B cell (primary cell): ENCODE measurements at regions of chr12 and their contacts with region 1.

Region 1: DNA sequence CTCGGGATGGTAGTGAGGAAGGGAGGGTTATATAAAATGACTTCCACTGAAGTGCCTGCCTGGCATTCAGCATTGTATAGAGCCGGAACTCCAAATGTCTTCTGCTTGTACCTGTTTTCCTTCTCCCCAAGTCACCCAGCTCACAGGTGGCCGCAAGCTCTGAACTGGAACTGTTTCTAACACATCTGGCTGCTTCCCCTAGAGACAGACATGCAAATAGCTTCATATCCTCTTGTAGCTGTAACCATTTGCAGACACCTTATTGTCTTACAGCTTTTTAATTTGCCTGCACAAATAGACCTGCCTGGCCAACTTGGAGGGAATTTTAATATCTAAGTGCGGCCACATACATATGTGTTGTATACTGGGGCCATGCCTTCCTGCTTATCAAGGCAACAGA is 126.0 kb downstream of the CHST11 start:
- DNase-seq: peak; percentile 90
- ATAC-seq: peak; percentile 91
- H3K4me3 ChIP-seq: peak overlapping the region in 3 of 5 experiments; percentile 4 to 30 (median 26)
- H3K4me3 Mint-ChIP-seq: peak overlapping the region; percentile 59
- H3K27ac ChIP-seq: peak overlapping the region; percentile 72 to 93
- H3K27ac Mint-ChIP-seq: peak overlapping the region; percentile 69
- H3K4me1 ChIP-seq: peaks cover 75 to 80% of the 10 kb centered on the region in 2 donors
- H3K4me1 Mint-ChIP-seq: peaks cover 88% of the 10 kb centered on the region
- H3K27me3 ChIP-seq: no peaks in the 10 kb centered on the region
- H3K27me3 Mint-ChIP-seq: no peaks in the 10 kb centered on the region
- CTCF ChIP-seq: no peak

Region 2: DNA sequence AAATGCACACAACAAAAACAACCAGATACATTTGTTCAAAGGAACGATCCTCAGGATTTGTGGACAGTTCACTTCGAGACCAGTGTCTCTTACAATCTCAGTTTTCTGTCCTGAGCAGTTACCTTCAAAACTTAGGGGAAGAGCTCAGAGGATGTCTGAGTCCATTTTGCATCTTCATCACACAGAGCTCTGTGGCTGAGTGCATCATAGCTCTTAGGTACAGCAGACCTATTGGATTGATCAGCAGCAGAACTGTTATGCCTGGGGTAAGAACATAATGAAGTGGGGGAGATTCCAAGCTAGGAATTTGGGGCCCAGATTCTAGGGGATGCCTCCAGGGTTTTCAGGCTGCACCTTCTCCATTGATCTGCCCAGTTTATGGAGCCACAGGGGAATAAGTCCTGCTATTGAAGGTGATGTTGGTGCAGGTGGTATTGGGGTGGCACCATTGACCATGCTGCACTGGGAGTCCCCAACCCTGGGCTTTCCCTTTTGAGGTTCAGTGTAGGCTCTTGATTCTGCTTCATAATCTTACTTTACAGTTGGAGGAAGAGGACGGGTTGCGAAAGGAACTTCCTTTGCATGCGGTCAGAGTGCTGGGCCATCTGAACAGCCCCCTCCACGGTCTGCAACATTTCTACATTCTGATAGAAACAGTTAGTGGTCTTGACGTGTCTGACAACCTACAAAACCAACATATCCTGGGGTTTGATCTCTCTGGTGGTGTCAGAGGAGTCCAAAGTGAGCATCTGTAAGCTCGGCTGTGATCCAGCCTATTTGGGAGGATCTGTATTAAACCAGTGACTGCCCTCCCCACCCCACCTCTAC is 13.2 kb before region 1 on chr12:
- CTCF ChIA-PET with region 1: interaction called, 6 read pairs
- POLR2A ChIA-PET with region 1: interaction called, 7 read pairs
- intact Hi-C with region 1: loop called (anchors 1 kb)
- DNase-seq: peak; percentile 90
- ATAC-seq: peak; percentile 75
- H3K4me3 ChIP-seq: peak overlapping the region in 3 of 5 experiments; percentile 18 to 50 (median 21)
- H3K4me3 Mint-ChIP-seq: peak overlapping the region; percentile 79
- H3K27ac ChIP-seq: peak overlapping the region; percentile 70 to 87
- H3K27ac Mint-ChIP-seq: peak overlapping the region; percentile 82
- H3K4me1 ChIP-seq: peaks cover 37 to 55% of the 10 kb centered on the region in 2 donors
- H3K4me1 Mint-ChIP-seq: peaks cover 75% of the 10 kb centered on the region
- H3K27me3 ChIP-seq: no peaks in the 10 kb centered on the region
- H3K27me3 Mint-ChIP-seq: no peaks in the 10 kb centered on the region
- CTCF ChIP-seq: no peak

Region 3: DNA sequence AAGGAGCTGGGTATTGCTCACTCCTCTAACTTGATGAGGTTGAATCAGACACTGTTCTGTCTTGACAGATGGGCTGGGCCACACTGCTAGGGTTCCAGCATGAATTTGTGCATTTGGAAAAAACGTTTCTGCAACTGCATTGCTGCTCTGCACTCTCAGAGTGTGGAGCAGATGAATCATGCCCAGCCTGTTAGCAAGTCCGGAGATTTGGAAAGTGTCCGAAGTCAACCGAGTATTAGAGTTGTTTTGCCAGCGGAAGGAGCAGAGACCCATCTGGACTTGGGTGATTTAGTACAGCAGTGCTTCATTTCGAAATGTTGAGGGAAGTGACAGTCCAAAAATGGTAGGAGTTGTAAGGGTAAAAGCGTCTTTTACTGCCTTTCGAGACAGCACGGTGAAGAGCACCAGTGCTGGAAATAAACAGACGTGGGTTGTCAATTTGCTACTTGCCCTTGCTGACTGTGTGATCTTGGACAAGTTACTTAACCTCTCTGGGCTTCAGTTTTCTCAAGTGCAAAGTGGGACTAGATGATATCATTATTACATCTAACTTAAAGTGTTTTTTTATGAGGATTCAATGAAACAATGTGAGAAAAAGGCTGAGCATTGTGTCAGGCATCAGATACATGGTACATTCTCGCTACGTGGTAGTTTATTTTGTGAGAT is 13.5 kb after region 1 on chr12:
- CTCF ChIA-PET with region 1: interaction called, 3 read pairs
- POLR2A ChIA-PET with region 1: no interaction called
- intact Hi-C with region 1: loop called (anchors 2 kb)
- DNase-seq: no peak
- ATAC-seq: no peak
- H3K4me3 ChIP-seq: no peak overlapping the region
- H3K4me3 Mint-ChIP-seq: no peak overlapping the region
- H3K27ac ChIP-seq: no peak overlapping the region
- H3K27ac Mint-ChIP-seq: no peak overlapping the region
- H3K4me1 ChIP-seq: peaks cover 46 to 56% of the 10 kb centered on the region in 2 donors
- H3K4me1 Mint-ChIP-seq: peaks cover 73% of the 10 kb centered on the region
- H3K27me3 ChIP-seq: no peaks in the 10 kb centered on the region
- H3K27me3 Mint-ChIP-seq: no peaks in the 10 kb centered on the region
- CTCF ChIP-seq: no peak

Region 4: DNA sequence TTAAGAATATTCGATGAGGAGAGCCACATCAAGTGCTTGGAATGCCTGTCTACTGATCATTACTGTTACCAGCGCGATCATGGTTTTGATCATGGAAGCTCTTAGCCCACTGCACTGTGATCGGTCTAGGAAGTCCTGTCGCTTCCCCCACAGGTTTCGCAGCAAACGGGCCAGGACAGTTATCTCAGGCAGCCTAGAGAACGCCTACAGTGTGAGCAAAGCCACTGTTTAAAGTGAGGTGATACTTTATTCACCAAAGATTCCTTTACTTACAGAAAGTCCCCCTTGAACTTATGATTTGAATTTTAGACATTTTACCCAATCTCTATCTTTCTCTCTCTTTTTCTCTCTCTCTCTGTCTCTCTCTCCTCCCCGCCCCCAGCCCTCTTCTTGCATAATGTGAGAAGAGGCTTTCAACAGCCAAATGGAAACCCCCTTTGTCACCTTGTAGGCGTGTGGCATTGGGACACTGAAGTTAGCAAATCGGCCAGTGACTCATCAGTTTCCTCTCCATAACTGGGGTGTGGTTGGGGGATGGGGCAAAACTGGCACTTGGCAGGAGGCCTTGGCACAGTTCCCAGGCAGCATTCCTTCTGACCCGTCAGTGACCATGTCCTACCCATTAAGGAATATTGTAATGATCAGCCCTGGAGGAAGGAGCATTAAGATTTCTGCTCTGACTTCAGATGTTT is 88.8 kb after region 1 on chr12:
- CTCF ChIA-PET with region 1: no interaction called
- POLR2A ChIA-PET with region 1: no interaction called
- intact Hi-C with region 1: loop called (anchors 2 kb)
- DNase-seq: peak; percentile 75
- ATAC-seq: peak; percentile 73
- H3K4me3 ChIP-seq: no peak overlapping the region
- H3K4me3 Mint-ChIP-seq: peak overlapping the region; percentile 61
- H3K27ac ChIP-seq: peak overlapping the region in 1 of 2 donors; percentile 48
- H3K27ac Mint-ChIP-seq: peak overlapping the region; percentile 71
- H3K4me1 ChIP-seq: peaks cover 39 to 62% of the 10 kb centered on the region in 2 donors
- H3K4me1 Mint-ChIP-seq: peaks cover 79% of the 10 kb centered on the region
- H3K27me3 ChIP-seq: no peaks in the 10 kb centered on the region
- H3K27me3 Mint-ChIP-seq: no peaks in the 10 kb centered on the region
- CTCF ChIP-seq: no peak

Region 5: DNA sequence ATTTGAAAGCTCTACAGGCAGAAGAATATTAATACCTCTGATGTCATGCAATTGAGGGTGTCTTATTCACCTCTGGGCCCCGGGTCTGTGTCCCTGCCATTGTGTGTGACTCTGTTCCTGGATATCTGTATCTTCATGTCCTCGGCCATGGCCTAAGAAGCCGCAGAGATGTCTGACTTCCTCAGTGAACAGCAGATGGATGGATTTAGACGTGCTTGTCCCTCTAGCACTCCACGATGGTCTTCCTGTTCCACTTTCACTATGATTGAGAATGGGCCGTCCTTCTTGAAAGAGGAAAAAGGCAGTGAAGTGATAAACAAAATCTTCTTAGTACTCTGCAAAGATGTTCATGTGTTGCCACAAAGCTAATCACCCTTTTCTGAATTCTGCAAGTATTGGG is 157.9 kb after region 1 on chr12:
- CTCF ChIA-PET with region 1: no interaction called
- POLR2A ChIA-PET with region 1: no interaction called
- intact Hi-C with region 1: loop called (anchors 5 kb)
- DNase-seq: peak; percentile 83
- ATAC-seq: peak; percentile 87
- H3K4me3 ChIP-seq: peak overlapping the region in 3 of 5 experiments; percentile 22 to 34 (median 33)
- H3K4me3 Mint-ChIP-seq: peak overlapping the region; percentile 74
- H3K27ac ChIP-seq: peak overlapping the region; percentile 66 to 83
- H3K27ac Mint-ChIP-seq: peak overlapping the region; percentile 93
- H3K4me1 ChIP-seq: peaks cover 77 to 88% of the 10 kb centered on the region in 2 donors
- H3K4me1 Mint-ChIP-seq: peaks cover 94% of the 10 kb centered on the region
- H3K27me3 ChIP-seq: no peaks in the 10 kb centered on the region
- H3K27me3 Mint-ChIP-seq: no peaks in the 10 kb centered on the region
- CTCF ChIP-seq: no peak